T-cell (primary cell): ENCODE measurements at regions of chr12 and their contacts with region 1.

Region 1: GRCh38 chr12:751192-751998 is 984 bp upstream of the WNK1 start:
- DNase-seq: peak; percentile 61 to 92 (median 72)
- ATAC-seq: peak; percentile 31 to 51 (median 42)
- H3K4me3 ChIP-seq: peak overlapping the region; percentile 65 to 87
- H3K4me3 Mint-ChIP-seq: no peak overlapping the region
- H3K27ac ChIP-seq: peak overlapping the region; percentile 81
- H3K27ac Mint-ChIP-seq: no peak overlapping the region
- H3K4me1 ChIP-seq: peaks cover 15 to 37% of the 10 kb centered on the region in 2 experiments
- H3K4me1 Mint-ChIP-seq: peaks cover 16 to 36% (median 20%) of the 10 kb centered on the region in 3 donors
- H3K27me3 ChIP-seq: no peaks in the 10 kb centered on the region
- H3K27me3 Mint-ChIP-seq: no peaks in the 10 kb centered on the region

Region 2: DNA sequence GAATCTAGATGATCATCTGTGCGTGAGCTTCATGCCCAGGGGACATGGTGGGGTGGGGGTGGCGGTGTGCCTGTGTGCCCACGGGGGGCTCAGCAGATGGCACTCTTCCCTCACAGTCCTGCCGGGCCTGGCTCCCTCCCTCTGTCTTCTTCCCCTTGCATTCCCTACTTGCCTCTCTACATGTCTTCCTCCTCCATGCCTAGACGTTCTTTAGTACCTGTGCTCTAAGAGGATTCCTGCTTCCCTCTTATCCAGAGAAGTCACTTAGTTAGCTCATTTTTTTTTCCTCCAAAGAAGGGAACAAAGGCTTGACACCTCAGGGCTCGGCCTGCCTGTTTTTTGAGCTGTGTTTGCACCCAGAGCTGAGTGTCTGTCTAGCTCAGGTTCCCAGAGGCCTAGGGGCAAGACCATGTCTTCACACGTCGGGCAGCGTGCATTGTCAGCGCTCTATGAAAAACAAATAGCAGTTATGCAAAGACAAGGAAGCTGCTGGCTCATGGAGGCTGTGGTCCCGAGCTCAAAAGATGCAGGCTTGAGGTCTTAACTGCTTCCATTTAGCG is 136.9 kb before region 1 on chr12:
- CTCF ChIA-PET with region 1: interaction called, 3 to 15 read pairs
- POLR2A ChIA-PET with region 1: interaction called in 1 of 2 experiments, 5 read pairs
- DNase-seq: peak in 18 of 35 experiments; percentile 11 to 55 (median 22)
- ATAC-seq: peak; percentile 48 to 81 (median 58)
- H3K4me3 ChIP-seq: no peak overlapping the region
- H3K4me3 Mint-ChIP-seq: no peak overlapping the region
- H3K27ac ChIP-seq: no peak overlapping the region
- H3K27ac Mint-ChIP-seq: no peak overlapping the region
- H3K4me1 ChIP-seq: peaks cover 17 to 21% of the 10 kb centered on the region in 2 experiments
- H3K4me1 Mint-ChIP-seq: peaks cover 21 to 35% (median 32%) of the 10 kb centered on the region in 3 donors
- H3K27me3 ChIP-seq: no peaks in the 10 kb centered on the region
- H3K27me3 Mint-ChIP-seq: no peaks in the 10 kb centered on the region

Region 3: GRCh38 chr12:666766-667308 is 84.6 kb before region 1 on chr12:
- CTCF ChIA-PET with region 1: interaction called in 1 of 2 experiments, 16 read pairs
- POLR2A ChIA-PET with region 1: interaction called in 1 of 2 experiments, 4 read pairs
- DNase-seq: peak in 11 of 35 experiments; percentile 18 to 48 (median 33)
- ATAC-seq: peak in 2 of 4 experiments; percentile 37 to 54
- H3K4me3 ChIP-seq: peak overlapping the region in 1 of 2 donors; percentile 6
- H3K4me3 Mint-ChIP-seq: peak overlapping the region; percentile 10 to 46 (median 28)
- H3K27ac ChIP-seq: peak overlapping the region; percentile 30
- H3K27ac Mint-ChIP-seq: peak overlapping the region; percentile 16 to 66
- H3K4me1 ChIP-seq: peaks cover 23 to 50% of the 10 kb centered on the region in 2 experiments
- H3K4me1 Mint-ChIP-seq: peaks cover 59 to 74% (median 71%) of the 10 kb centered on the region in 3 donors
- H3K27me3 ChIP-seq: no peaks in the 10 kb centered on the region
- H3K27me3 Mint-ChIP-seq: no peaks in the 10 kb centered on the region

Region 4: GRCh38 chr12:685388-685787 is 66.0 kb before region 1 on chr12:
- CTCF ChIA-PET with region 1: interaction called, 4 to 24 read pairs
- POLR2A ChIA-PET with region 1: interaction called, 7 to 27 read pairs
- DNase-seq: peak; percentile 60 to 94 (median 85)
- ATAC-seq: peak; percentile 97 to 100 (median 100)
- H3K4me3 ChIP-seq: no peak overlapping the region
- H3K4me3 Mint-ChIP-seq: peak overlapping the region; percentile 31 to 60 (median 47)
- H3K27ac ChIP-seq: peak overlapping the region; percentile 92
- H3K27ac Mint-ChIP-seq: peak overlapping the region; percentile 97
- H3K4me1 ChIP-seq: peaks cover 23 to 46% of the 10 kb centered on the region in 2 experiments
- H3K4me1 Mint-ChIP-seq: peaks cover 38 to 50% (median 46%) of the 10 kb centered on the region in 3 donors
- H3K27me3 ChIP-seq: no peaks in the 10 kb centered on the region
- H3K27me3 Mint-ChIP-seq: no peaks in the 10 kb centered on the region

Region 5: DNA sequence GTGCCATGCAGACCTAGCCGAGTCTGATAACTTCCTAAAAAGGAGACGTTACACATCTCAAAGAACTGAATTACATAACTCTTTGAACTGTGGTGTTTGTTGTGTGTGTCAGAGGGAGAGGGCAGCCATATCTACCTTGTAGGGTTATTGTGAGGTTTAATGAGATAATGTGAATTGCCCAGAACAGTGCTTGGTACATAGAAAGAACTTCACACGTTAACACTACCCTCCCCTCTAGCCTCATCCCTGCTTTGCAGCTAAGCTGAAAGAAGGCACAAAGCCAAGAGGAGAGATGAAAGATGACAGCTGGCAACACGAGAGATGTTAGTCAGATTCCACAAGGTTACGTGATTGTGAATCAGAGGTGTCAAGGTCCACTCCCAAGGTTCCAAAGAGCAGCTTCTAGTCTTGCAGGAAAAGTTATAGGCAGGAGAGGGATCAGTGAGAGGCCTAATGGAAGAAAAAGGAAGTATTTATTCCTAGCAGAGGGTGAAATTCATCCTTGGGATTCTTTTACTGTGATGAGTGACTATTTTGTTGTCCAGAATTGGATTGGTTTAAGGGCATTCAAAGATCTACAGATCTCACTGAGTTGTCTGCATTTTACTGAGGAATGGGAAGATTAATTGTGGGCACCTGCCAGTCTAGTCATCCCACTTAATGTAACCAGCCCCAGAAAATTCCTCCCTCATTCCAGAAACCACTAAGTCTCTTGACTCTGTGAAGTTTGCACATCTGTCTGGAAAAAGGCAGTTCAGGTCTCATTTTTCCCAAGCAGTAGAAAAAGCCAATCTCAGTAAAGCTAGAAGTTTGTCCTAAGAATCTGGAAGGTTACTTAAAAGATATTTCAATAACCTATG is 24.9 kb before region 1 on chr12:
- CTCF ChIA-PET with region 1: interaction called, 3 to 60 read pairs
- POLR2A ChIA-PET with region 1: interaction called, 8 to 10 read pairs
- DNase-seq: peak in 8 of 35 experiments; percentile 2 to 33 (median 12)
- ATAC-seq: peak in 3 of 4 experiments; percentile 28 to 65 (median 34)
- H3K4me3 ChIP-seq: no peak overlapping the region
- H3K4me3 Mint-ChIP-seq: peak overlapping the region in 1 of 3 donors; percentile 48
- H3K27ac ChIP-seq: peak overlapping the region; percentile 15
- H3K27ac Mint-ChIP-seq: peak overlapping the region; percentile 78 to 86
- H3K4me1 ChIP-seq: peaks cover 31 to 65% of the 10 kb centered on the region in 2 experiments
- H3K4me1 Mint-ChIP-seq: peaks cover 78 to 91% (median 82%) of the 10 kb centered on the region in 3 donors
- H3K27me3 ChIP-seq: no peaks in the 10 kb centered on the region
- H3K27me3 Mint-ChIP-seq: no peaks in the 10 kb centered on the region

Region 6: DNA sequence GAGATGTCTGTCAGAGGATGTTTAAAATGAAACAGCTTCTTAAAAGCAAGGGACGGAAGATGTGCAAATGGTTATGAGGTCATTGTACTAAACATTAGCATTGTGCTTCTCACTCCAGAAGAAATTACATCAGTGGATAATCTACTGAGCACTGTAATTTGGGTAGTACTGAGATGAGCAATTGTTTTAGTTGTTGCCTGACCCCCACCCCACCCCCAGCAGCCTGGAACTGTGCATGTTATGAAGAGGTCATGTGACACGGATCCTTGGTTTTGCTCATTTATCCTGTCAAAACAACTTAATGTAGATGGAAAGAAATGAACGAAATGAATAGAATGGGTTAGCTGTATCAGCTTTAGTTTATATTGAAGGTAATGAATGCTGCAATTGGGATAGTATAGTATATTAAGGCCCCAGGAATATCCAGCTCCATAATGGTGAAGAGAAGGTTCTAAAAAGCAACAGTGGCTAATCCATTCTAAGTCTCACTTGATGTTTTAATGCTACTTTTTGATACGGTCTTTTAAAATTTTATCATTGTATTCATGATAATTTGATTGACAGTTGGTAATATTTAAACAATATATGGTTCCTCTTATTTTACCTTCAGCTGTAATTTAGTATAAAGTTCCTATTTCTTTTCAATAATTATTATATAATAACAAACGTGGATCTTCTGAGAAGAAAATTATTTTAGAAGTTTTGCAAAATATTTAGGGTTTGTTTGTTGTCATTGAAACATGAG is 59.4 kb after region 1 on chr12:
- CTCF ChIA-PET with region 1: interaction called, 3 to 51 read pairs
- POLR2A ChIA-PET with region 1: interaction called in 1 of 2 experiments, 9 read pairs
- DNase-seq: no peak
- ATAC-seq: no peak
- H3K4me3 ChIP-seq: no peak overlapping the region
- H3K4me3 Mint-ChIP-seq: peak overlapping the region in 1 of 3 donors; percentile 14
- H3K27ac ChIP-seq: no peak overlapping the region
- H3K27ac Mint-ChIP-seq: peak overlapping the region; percentile 63 to 84
- H3K4me1 ChIP-seq: peaks cover 27 to 35% of the 10 kb centered on the region in 2 experiments
- H3K4me1 Mint-ChIP-seq: peaks cover 69 to 72% (median 69%) of the 10 kb centered on the region in 3 donors
- H3K27me3 ChIP-seq: no peaks in the 10 kb centered on the region
- H3K27me3 Mint-ChIP-seq: no peaks in the 10 kb centered on the region

Region 7: DNA sequence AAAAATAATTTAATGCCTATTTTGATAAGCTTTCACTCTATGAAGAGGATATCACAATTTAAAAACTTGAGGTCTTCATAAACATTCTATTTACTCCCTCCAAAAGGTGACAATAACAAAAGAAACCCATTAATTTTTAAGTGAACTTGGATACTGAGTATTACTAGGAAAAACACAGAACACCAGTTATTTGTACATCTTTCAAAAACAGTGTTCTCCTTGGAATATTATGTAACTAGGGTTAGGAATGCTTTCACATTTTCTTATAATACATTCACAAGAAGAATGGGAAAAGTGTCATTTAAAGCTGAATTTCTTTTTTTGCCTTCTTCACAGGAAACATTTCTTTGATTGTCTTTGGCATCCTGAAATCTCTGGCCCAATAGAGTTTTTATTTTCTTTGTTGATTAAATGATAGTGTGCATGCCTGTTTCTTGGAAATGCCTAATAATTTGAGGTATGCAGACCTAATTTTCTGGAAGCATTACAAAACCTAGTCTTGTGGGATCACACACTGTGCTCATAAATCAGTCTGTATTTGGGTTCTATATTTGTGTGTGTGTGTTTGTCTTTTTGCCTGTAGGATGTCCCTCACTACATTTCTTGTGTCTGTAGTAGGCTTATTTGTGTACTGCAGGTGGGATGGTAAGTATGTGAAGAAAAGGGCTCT is 77.5 kb after region 1 on chr12:
- CTCF ChIA-PET with region 1: no interaction called
- POLR2A ChIA-PET with region 1: no interaction called
- DNase-seq: no peak
- ATAC-seq: no peak
- H3K4me3 ChIP-seq: no peak overlapping the region
- H3K4me3 Mint-ChIP-seq: no peak overlapping the region
- H3K27ac ChIP-seq: no peak overlapping the region
- H3K27ac Mint-ChIP-seq: no peak overlapping the region
- H3K4me1 ChIP-seq: peaks cover 0 to 3% of the 10 kb centered on the region in 2 experiments
- H3K4me1 Mint-ChIP-seq: peaks cover 21 to 52% (median 46%) of the 10 kb centered on the region in 3 donors
- H3K27me3 ChIP-seq: no peaks in the 10 kb centered on the region
- H3K27me3 Mint-ChIP-seq: no peaks in the 10 kb centered on the region

Region 8: GRCh38 chr12:949453-950191 is 198.2 kb after region 1 on chr12 and contains the start of gene RAD52:
- CTCF ChIA-PET with region 1: interaction called in 1 of 2 experiments, 11 read pairs
- POLR2A ChIA-PET with region 1: no interaction called
- DNase-seq: peak; percentile 91 to 98 (median 95)
- ATAC-seq: peak; percentile 86 to 94 (median 88)
- H3K4me3 ChIP-seq: peak within 1 kb of the TSS; percentile 80 to 81
- H3K4me3 Mint-ChIP-seq: peak within 1 kb of the TSS; percentile 96 to 98 (median 97)
- H3K27ac ChIP-seq: peak within 1 kb of the TSS; percentile 63
- H3K27ac Mint-ChIP-seq: peak within 1 kb of the TSS; percentile 95 to 97
- H3K4me1 ChIP-seq: peaks cover 2 to 20% of the 10 kb centered on the region in 2 experiments
- H3K4me1 Mint-ChIP-seq: peaks cover 28 to 33% (median 31%) of the 10 kb centered on the region in 3 donors
- H3K27me3 ChIP-seq: no peaks in the 10 kb centered on the region
- H3K27me3 Mint-ChIP-seq: no peaks in the 10 kb centered on the region
- total RNA-seq, gene RAD52: 12.7 to 28.4 (median 18.3) TPM